PC-3 (cell line): ENCODE measurements at regions of chr14 and their contacts with region 1.

Region 1: GRCh38 chr14:35404449-35405303 is at the start of gene NFKBIA:
- DNase-seq: peak; percentile 90
- ATAC-seq: peak; percentile 73
- H3K4me3 ChIP-seq: peak within 1 kb of the TSS; percentile 92
- H3K27ac ChIP-seq: peak within 1 kb of the TSS; percentile 91
- H3K4me1 ChIP-seq: peaks cover 34% of the 10 kb centered on the region
- H3K27me3 ChIP-seq: no peaks in the 10 kb centered on the region
- CTCF ChIP-seq: peak; percentile 55
- total RNA-seq, gene NFKBIA: 186 and 226 TPM in 2 replicates

Region 2: GRCh38 chr14:35046048-35046741 is 358.5 kb before region 1 on chr14 and contains the start of gene FAM177A1:
- CTCF ChIA-PET with region 1: no interaction called
- POLR2A ChIA-PET with region 1: interaction called, 4 read pairs
- intact Hi-C with region 1: loop called (anchors 2 kb)
- DNase-seq: peak; percentile 96
- ATAC-seq: peak; percentile 87
- H3K4me3 ChIP-seq: peak within 1 kb of the TSS; percentile 87
- H3K27ac ChIP-seq: peak within 1 kb of the TSS; percentile 75
- H3K4me1 ChIP-seq: peaks cover 32% of the 10 kb centered on the region
- H3K27me3 ChIP-seq: no peaks in the 10 kb centered on the region
- CTCF ChIP-seq: no peak
- total RNA-seq, gene FAM177A1: 36.2 and 62.8 TPM in 2 replicates

Region 3: DNA sequence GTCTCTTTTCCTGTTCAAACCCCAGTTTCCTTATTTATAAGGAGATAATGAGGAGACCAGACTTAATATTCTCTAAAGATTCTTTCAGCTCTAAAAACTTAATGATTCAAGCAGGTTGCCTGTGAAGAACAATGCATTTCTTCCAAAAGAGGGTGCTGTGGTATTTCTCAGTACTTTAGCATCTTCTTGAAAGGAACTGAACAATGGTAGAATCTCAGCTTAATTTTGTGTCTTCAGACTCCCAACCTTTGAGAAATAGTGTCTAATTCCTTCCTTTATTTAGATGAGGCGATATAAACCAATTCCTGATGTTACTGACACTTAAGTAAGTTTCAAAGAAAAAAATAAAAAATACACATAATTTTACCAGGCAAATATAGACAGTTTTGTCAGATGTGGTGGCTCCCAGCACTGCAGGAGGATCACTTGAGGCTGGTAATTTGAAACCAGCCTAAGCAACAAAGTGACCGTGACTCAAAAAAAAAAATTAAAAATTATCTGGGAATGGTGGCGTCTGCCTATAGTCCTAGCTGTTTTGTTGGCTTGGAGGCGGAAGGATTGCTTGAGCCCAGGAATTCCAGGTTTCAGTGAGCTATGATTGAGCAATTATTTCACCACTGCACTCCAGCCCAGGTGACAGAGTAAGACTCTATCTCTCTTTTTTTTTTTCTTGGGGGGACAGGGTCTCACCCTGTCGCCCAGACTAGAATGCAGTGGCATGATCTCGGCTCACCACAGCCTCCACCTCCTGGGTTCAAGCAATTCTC is 189.4 kb before region 1 on chr14:
- CTCF ChIA-PET with region 1: no interaction called
- POLR2A ChIA-PET with region 1: interaction called, 3 read pairs
- intact Hi-C with region 1: loop called (anchors 1 kb)
- DNase-seq: peak; percentile 63
- ATAC-seq: peak; percentile 34; the same call in 1 of the 2 replicates
- H3K4me3 ChIP-seq: no peak overlapping the region
- H3K27ac ChIP-seq: no peak overlapping the region
- H3K4me1 ChIP-seq: peaks cover 14% of the 10 kb centered on the region
- H3K27me3 ChIP-seq: no peaks in the 10 kb centered on the region
- CTCF ChIP-seq: peak; percentile 73

Region 4: GRCh38 chr14:35250319-35250718 is 154.4 kb before region 1 on chr14:
- CTCF ChIA-PET with region 1: no interaction called
- POLR2A ChIA-PET with region 1: interaction called, 10 read pairs
- intact Hi-C with region 1: no loop called
- DNase-seq: peak; percentile 40
- ATAC-seq: peak; percentile 96
- H3K4me3 ChIP-seq: no peak overlapping the region
- H3K27ac ChIP-seq: 0 out of 2 replicates have a peak overlapping the region, but pooled peaks have one; percentile 11
- H3K4me1 ChIP-seq: peaks cover 14% of the 10 kb centered on the region
- H3K27me3 ChIP-seq: no peaks in the 10 kb centered on the region
- CTCF ChIP-seq: no peak

Region 5: GRCh38 chr14:35374273-35374681 is 30.4 kb before region 1 on chr14:
- CTCF ChIA-PET with region 1: interaction called, 10 read pairs
- POLR2A ChIA-PET with region 1: interaction called, 5 read pairs
- intact Hi-C with region 1: loop called (anchors 2 kb)
- DNase-seq: peak; percentile 84
- ATAC-seq: peak; percentile 30; the same call in 1 of the 2 replicates
- H3K4me3 ChIP-seq: no peak overlapping the region
- H3K27ac ChIP-seq: peak overlapping the region; percentile 15
- H3K4me1 ChIP-seq: peaks cover 20% of the 10 kb centered on the region
- H3K27me3 ChIP-seq: no peaks in the 10 kb centered on the region
- CTCF ChIP-seq: no peak